Prostate gland (tissue), 2 donors: ENCODE measurements at regions of chr6 and their contacts with region 1.

Region 1: GRCh38 chr6:110528101-110528929 is 51.9 kb upstream of the SLC22A16 start:
- DNase-seq: peak; percentile 73
- H3K4me3 ChIP-seq: no peak overlapping the region
- H3K27ac ChIP-seq: peak overlapping the region; percentile 21 to 73
- H3K4me1 ChIP-seq: peaks cover 14% of the 10 kb centered on the region
- H3K27me3 ChIP-seq: no peaks in the 10 kb centered on the region
- CTCF ChIP-seq: peak; percentile 73 to 90 (median 84)
- POLR2A ChIP-seq: no peak

Region 2: DNA sequence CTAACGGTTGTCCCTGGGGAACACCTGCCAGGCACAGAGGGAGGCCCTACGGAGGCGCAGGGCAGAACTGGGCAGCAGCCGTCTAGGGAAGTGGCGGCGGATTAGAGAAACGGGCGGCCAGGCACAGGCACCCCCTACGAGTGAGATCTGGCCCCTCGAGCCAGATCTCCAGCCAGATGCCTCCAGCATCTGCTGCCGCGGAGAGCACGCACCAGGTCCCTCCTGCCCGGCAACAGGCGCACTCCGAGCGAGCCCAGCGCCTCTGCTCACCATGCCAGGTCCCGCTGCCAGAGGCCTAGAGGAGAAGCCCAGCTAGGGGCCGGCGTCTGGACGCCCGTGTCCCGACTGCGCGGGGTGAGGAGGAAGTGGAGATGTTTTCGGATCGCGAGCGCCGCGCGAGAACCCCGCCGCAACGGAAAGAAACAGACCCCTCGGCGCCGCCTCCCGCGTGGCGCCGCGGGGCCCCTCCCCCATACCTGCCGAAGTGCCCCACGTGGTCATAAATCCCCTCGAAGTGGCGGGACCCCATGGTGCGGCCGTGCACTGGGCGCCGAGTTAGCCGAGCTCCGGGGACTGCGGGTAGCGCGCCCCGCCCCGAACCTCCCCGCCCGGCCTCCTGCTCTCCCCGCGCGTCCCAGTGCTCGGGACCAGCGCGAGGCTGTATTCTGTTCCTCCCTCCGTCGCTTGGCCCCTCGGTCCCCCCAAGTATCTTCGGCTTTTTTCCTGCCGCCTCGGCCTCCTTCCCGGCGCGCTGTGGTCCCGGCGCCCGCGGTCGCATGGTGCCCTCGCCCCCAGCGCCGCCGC is 52.1 kb before region 1 on chr6 and contains the start of gene SLC22A16:
- intact Hi-C with region 1: no loop called
- DNase-seq: no peak
- H3K4me3 ChIP-seq: peak within 1 kb of the TSS; percentile 15 to 35
- H3K27ac ChIP-seq: no peak within 1 kb of the TSS
- H3K4me1 ChIP-seq: no peaks in the 10 kb centered on the region
- H3K27me3 ChIP-seq: no peaks in the 10 kb centered on the region
- CTCF ChIP-seq: no peak
- POLR2A ChIP-seq: no peak
- total RNA-seq, gene SLC22A16: 2.7 TPM in 1 of 2 donors, not detected in the other

Region 3: GRCh38 chr6:110597761-110598160 is 69.4 kb after region 1 on chr6:
- intact Hi-C with region 1: no loop called
- DNase-seq: no peak
- H3K4me3 ChIP-seq: no peak overlapping the region
- H3K27ac ChIP-seq: peak overlapping the region in 1 of 2 donors; percentile 60
- H3K4me1 ChIP-seq: peaks cover 3% of the 10 kb centered on the region
- H3K27me3 ChIP-seq: no peaks in the 10 kb centered on the region
- CTCF ChIP-seq: no peak
- POLR2A ChIP-seq: no peak

Region 4: GRCh38 chr6:110944681-110945151 is 416.4 kb after region 1 on chr6:
- intact Hi-C with region 1: loop called (anchors 5 kb)
- DNase-seq: no peak
- H3K4me3 ChIP-seq: no peak overlapping the region
- H3K27ac ChIP-seq: no peak overlapping the region
- H3K4me1 ChIP-seq: no peaks in the 10 kb centered on the region
- H3K27me3 ChIP-seq: no peaks in the 10 kb centered on the region
- CTCF ChIP-seq: no peak
- POLR2A ChIP-seq: no peak

Region 5: GRCh38 chr6:110999634-111000270 is 471.4 kb after region 1 on chr6:
- intact Hi-C with region 1: loop called (anchors 5 kb)
- DNase-seq: no peak
- H3K4me3 ChIP-seq: no peak overlapping the region
- H3K27ac ChIP-seq: no peak overlapping the region
- H3K4me1 ChIP-seq: no peaks in the 10 kb centered on the region
- H3K27me3 ChIP-seq: no peaks in the 10 kb centered on the region
- CTCF ChIP-seq: peak in 3 of 4 experiments; percentile 50 to 68 (median 61)
- POLR2A ChIP-seq: no peak